ENCODE measurements at regions of chr19 and their contacts with region 1.

Region 1: DNA sequence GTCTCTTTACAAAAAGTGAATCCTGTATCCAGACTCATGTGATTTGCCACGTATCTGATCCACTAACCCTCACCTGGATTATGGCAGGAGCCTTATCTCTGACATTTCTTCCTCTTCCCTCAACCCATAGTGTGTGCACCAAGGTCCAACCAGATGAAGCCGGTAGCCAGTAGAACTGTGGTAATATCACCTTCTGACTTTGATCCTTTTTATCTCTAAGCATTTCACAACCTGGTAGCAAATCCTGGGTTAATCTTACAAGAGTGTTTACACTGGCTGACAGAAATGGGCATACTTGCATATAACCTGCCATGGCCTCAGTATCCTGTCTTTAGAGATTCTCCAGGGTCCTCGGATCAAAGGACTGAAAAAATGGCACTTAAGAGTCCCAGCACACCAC is 1.9 kb downstream of the ZNF417 start:
- DNase-seq: no peak
- ATAC-seq: no peak
- H3K4me3 Mint-ChIP-seq: no peak overlapping the region
- H3K27ac Mint-ChIP-seq: no peak overlapping the region
- H3K4me1 Mint-ChIP-seq: peaks cover 27% of the 10 kb centered on the region
- H3K27me3 Mint-ChIP-seq: no peaks in the 10 kb centered on the region

Region 2: GRCh38 chr19:57350877-57351805 is 563.4 kb before region 1 on chr19 and contains the start of gene ZNF304:
- CTCF ChIA-PET with region 1: no interaction called
- POLR2A ChIA-PET with region 1: no interaction called
- intact Hi-C with region 1: loop called in 1 of 2 experiments (anchors 1 kb)
- DNase-seq: peak; percentile 94
- ATAC-seq: peak; percentile 100
- H3K4me3 Mint-ChIP-seq: peak within 1 kb of the TSS; percentile 96
- H3K27ac Mint-ChIP-seq: peak within 1 kb of the TSS; percentile 90
- H3K4me1 Mint-ChIP-seq: peaks cover 25% of the 10 kb centered on the region
- H3K27me3 Mint-ChIP-seq: peaks cover 4% of the 10 kb centered on the region
- total RNA-seq, gene ZNF304: 6.2 TPM

Region 3: DNA sequence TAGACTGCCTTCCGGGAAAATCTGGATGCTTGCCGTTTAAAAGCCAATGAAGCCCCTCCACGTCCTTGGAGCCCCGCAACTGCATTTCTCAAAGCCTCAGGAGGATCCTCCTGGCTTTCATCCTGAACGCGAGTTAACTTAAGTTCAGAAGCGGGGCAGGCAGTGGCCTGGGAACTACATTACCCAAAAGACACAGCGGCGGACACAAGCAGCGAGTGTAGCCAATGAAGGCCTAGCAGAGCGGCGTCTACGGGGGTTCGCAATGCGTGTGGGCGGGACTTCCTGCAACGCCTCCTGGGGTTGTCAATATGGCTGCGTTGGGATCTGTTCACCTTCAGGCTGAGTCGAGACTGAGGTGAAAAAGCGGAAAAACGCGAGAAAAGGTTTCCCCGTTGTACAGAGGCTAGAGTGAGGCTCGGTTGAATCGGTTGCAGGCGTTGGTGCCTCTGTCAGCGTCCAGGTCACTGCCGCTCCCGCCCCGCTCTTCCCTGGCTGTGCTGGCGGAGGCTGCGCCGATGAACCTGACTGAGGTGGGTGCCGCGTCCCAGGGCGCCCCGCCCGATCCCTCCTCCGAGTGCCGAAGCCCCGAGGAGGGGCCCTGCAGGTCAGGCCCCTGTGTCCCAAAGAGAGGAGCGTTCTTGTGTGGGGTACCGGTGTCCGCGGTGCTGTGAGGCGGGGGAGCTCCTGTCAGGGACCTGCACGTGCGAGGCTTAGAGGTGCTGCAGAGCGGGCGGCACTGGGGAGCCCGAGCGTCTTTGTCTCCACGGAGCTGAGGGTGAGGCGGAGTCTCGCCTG is 503.5 kb before region 1 on chr19 and contains the start of gene ZNF17:
- CTCF ChIA-PET with region 1: no interaction called
- POLR2A ChIA-PET with region 1: no interaction called
- intact Hi-C with region 1: loop called (anchors 1 kb)
- DNase-seq: peak; percentile 96
- ATAC-seq: peak; percentile 100
- H3K4me3 Mint-ChIP-seq: peak within 1 kb of the TSS; percentile 93
- H3K27ac Mint-ChIP-seq: peak within 1 kb of the TSS; percentile 84
- H3K4me1 Mint-ChIP-seq: peaks cover 14% of the 10 kb centered on the region
- H3K27me3 Mint-ChIP-seq: no peaks in the 10 kb centered on the region
- total RNA-seq, gene ZNF17: 6.4 to 8.3 TPM

Region 4: DNA sequence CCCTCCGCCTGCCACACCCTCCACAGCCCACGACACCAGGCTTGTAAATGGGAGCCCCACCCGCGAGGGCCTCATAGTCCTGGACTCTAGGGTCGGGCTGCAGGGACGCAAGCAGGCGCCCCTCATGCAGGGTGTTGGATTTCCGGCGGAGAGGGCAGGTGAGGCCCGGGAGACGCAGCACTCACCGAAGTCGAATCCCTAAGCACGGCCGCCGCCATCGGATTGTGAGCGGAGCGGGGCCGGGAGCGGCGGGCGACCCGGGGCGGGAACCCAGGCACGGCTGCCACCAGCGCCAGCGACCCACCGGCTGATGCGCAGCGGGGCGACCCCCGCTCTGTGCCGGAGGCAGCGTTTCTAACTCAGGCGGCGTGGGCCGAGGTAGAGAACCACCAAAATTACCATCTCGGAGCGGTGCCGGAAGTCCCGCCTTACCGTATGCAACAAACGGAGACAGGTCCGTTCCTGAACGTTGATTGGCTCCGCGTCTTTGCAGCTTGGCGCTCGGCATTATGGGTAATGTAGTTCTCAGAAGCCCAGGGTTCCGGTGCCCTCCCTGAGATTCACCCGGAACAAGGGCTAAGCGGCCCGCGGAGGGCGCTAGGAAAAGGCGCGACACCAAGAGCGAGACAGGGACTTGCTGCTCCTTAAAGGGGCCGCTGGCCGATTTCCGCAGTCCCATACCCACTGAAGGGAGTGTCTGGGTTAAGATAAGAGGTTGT is 335.9 kb before region 1 on chr19 and contains the start of gene ZNF416:
- CTCF ChIA-PET with region 1: no interaction called
- POLR2A ChIA-PET with region 1: no interaction called
- intact Hi-C with region 1: loop called in 1 of 2 experiments (anchors 1 kb)
- DNase-seq: peak; percentile 97
- ATAC-seq: peak; percentile 96
- H3K4me3 Mint-ChIP-seq: peak within 1 kb of the TSS; percentile 77
- H3K27ac Mint-ChIP-seq: peak within 1 kb of the TSS; percentile 77
- H3K4me1 Mint-ChIP-seq: peaks cover 23% of the 10 kb centered on the region
- H3K27me3 Mint-ChIP-seq: no peaks in the 10 kb centered on the region
- total RNA-seq, gene ZNF416: 3.3 to 3.7 TPM

Region 5: GRCh38 chr19:57746580-57747471 is 167.7 kb before region 1 on chr19 and contains the start of gene ZNF776:
- CTCF ChIA-PET with region 1: no interaction called
- POLR2A ChIA-PET with region 1: interaction called, 3 read pairs
- intact Hi-C with region 1: loop called in 1 of 2 experiments (anchors 1 kb)
- DNase-seq: peak; percentile 89
- ATAC-seq: peak; percentile 98
- H3K4me3 Mint-ChIP-seq: peak within 1 kb of the TSS; percentile 93
- H3K27ac Mint-ChIP-seq: peak within 1 kb of the TSS; percentile 98
- H3K4me1 Mint-ChIP-seq: peaks cover 15% of the 10 kb centered on the region
- H3K27me3 Mint-ChIP-seq: no peaks in the 10 kb centered on the region
- total RNA-seq, gene ZNF776: 8.9 to 14.7 TPM

Region 6: GRCh38 chr19:57819475-57820148 is 94.9 kb before region 1 on chr19:
- CTCF ChIA-PET with region 1: no interaction called
- POLR2A ChIA-PET with region 1: interaction called, 4 read pairs
- intact Hi-C with region 1: loop called in 1 of 2 experiments (anchors 1 kb)
- DNase-seq: peak; percentile 89
- ATAC-seq: peak; percentile 90
- H3K4me3 Mint-ChIP-seq: peak overlapping the region; percentile 97
- H3K27ac Mint-ChIP-seq: peak overlapping the region; percentile 94
- H3K4me1 Mint-ChIP-seq: peaks cover 51% of the 10 kb centered on the region
- H3K27me3 Mint-ChIP-seq: no peaks in the 10 kb centered on the region

Region 7: DNA sequence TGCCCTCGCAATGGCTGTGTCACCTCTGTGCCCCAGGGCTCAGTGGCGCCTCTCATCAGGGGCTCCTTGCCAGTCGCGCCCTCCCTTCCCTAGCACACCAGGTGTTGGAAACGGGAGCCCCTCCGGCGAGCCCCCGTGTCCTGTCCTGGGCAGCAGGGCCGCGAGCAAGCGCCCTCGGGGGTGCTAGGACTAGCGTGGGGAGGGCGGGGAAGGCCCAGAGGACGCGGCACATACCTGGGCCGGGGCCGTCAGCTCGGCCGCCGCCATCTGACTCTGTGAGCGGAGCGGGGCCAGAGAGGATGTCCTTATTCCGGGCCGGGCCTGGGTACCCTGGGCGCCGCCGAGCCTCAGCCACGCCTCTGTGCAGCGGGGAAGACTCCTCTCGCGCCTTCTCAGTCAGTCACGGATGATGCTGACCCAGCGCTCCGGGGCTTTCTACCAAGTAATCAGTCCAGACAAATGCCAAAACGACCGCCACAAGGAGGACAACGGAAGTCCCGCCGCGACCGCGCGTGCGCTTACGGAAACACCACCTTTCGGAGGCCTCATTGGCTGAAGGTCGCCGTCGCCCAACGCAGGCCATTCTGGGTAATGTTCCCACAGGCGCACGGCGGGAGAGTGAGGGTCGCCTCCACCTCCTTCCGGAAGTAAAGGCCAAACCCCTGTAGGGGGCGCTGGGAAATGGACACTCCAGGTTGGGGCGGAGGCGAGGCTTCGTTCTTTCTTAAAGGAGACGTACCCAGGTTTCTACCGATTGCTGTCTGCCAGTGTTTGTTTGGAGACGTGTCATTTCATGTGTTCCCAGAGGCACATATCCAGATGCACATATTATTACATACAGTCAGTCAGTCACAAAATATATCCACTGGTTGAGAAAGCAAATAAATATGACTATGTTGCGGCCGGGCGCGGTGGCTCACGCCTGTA is 32.9 kb after region 1 on chr19 and contains the start of gene ZNF256:
- CTCF ChIA-PET with region 1: no interaction called
- POLR2A ChIA-PET with region 1: no interaction called
- intact Hi-C with region 1: loop called (anchors 1 kb)
- DNase-seq: peak; percentile 95
- ATAC-seq: peak; percentile 99
- H3K4me3 Mint-ChIP-seq: peak within 1 kb of the TSS; percentile 87
- H3K27ac Mint-ChIP-seq: peak within 1 kb of the TSS; percentile 90
- H3K4me1 Mint-ChIP-seq: peaks cover 16% of the 10 kb centered on the region
- H3K27me3 Mint-ChIP-seq: no peaks in the 10 kb centered on the region
- total RNA-seq, gene ZNF256: 6.3 to 6.9 TPM

Region 8: DNA sequence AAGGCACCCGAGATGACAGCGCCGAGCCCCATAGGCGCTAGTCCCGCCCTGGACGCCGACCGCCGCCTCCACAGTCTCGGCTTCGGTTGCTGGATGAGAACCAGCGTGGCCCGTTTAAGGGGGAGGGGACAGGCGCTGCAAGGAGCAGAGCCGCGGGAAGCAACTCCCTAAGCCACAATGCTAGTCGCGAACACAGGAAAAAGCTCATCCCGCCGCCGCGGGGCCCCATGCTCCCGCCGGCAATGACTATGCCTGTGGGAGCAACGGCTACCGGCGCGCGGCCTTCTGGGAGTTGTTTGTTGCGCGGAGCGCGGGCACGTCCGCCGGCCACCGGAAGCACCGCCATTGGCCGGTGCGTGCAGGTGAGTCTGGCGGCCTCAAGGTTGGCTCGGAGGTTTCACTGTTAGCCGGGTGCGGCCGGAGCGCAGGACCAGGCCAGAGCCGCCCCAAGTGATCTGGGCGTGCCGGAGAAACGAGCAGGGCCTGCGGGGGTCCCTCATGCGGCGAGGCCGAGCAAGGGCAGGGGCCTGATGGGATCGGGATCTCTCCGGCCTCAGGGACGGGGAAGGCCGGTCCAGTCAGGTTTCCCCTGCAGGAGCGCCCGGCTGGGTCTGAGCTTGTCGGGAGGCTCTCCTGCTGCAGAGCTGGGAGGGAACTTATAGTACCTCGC is 314.2 kb after region 1 on chr19 and contains the start of gene ZNF544:
- CTCF ChIA-PET with region 1: no interaction called
- POLR2A ChIA-PET with region 1: no interaction called
- intact Hi-C with region 1: no loop called
- DNase-seq: peak; percentile 85
- ATAC-seq: peak; percentile 87
- H3K4me3 Mint-ChIP-seq: peak within 1 kb of the TSS; percentile 91
- H3K27ac Mint-ChIP-seq: peak within 1 kb of the TSS; percentile 95
- H3K4me1 Mint-ChIP-seq: peaks cover 24% of the 10 kb centered on the region
- H3K27me3 Mint-ChIP-seq: no peaks in the 10 kb centered on the region
- total RNA-seq, gene ZNF544: 32.2 to 38.5 TPM

Measured in activated CD4-positive, alpha-beta T cell treated with anti-CD3 and anti-CD28 coated beads for 36 hours (primary cell).